Sigmoid colon (tissue), 7 donors: ENCODE measurements at regions of chr14 and their contacts with region 1.

Region 1: GRCh38 chr14:73886449-73887317 is at the start of gene ZNF410:
- DNase-seq: peak; percentile 98
- H3K4me3 ChIP-seq: peak within 1 kb of the TSS; percentile 71 to 77 (median 74)
- H3K27ac ChIP-seq: peak within 1 kb of the TSS; percentile 91 to 96 (median 94)
- H3K4me1 ChIP-seq: peaks cover 0 to 33% (median 25%) of the 10 kb centered on the region in 4 donors
- H3K27me3 ChIP-seq: no peaks in the 10 kb centered on the region
- CTCF ChIP-seq: no peak
- EP300 ChIP-seq: peak in 2 of 4 donors; percentile 18 to 76
- POLR2A ChIP-seq: peak; percentile 48 to 55
- total RNA-seq, gene ZNF410: 45.1 to 67.8 (median 53.8) TPM

Region 2: DNA sequence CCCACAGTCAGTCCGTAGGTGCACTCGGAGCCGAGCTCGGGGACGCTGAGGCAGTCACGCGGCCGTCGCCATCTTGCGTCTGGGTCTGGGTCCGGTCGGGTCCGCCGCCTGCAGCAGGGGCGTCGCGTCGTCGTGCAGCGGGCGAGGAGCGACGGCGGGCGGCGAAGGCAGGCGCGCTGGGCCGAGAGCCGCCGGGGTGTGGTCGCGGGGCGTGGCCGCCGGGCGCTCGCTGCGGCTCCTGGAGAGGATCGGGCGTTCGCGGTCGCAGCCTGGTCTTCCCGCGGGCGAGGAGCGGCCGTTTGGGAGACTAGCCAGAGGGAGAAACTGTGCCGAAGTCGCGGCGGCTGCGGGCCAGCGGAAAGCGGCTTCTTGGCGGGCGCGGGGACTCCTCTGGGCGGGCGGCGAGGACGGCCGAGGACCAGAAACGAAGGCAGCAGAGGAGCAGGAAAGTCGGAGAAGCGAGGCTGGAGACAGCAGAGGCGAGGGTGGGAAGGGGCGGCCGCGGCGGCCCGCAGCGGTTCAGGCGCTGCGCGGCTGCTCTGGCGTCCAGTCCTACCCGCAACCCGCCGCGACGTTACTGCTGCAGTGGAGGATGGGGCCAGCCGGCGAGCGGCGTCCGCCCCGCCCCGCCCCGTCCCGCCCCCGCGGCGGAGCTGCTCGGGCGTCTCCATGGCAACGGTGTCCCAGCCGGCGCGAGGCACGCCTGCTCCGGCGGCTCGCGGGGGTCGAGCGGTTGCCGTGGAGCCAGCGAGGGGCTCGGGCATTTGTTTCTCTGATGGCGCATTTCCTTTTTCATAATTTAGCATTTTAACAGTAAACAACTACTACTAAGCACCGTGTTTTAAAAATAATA is 172.7 kb before region 1 on chr14 and contains the start of gene PNMA1:
- intact Hi-C with region 1: loop called (anchors 5 kb)
- DNase-seq: peak; percentile 95
- H3K4me3 ChIP-seq: peak within 1 kb of the TSS; percentile 66 to 94 (median 80)
- H3K27ac ChIP-seq: peak within 1 kb of the TSS; percentile 90 to 99 (median 95)
- H3K4me1 ChIP-seq: peaks cover 0 to 63% (median 50%) of the 10 kb centered on the region in 4 donors
- H3K27me3 ChIP-seq: no peaks in the 10 kb centered on the region
- CTCF ChIP-seq: no peak
- EP300 ChIP-seq: no peak
- POLR2A ChIP-seq: peak; percentile 49 to 50
- total RNA-seq, gene PNMA1: 33.5 to 63.1 (median 37.3) TPM

Region 3: DNA sequence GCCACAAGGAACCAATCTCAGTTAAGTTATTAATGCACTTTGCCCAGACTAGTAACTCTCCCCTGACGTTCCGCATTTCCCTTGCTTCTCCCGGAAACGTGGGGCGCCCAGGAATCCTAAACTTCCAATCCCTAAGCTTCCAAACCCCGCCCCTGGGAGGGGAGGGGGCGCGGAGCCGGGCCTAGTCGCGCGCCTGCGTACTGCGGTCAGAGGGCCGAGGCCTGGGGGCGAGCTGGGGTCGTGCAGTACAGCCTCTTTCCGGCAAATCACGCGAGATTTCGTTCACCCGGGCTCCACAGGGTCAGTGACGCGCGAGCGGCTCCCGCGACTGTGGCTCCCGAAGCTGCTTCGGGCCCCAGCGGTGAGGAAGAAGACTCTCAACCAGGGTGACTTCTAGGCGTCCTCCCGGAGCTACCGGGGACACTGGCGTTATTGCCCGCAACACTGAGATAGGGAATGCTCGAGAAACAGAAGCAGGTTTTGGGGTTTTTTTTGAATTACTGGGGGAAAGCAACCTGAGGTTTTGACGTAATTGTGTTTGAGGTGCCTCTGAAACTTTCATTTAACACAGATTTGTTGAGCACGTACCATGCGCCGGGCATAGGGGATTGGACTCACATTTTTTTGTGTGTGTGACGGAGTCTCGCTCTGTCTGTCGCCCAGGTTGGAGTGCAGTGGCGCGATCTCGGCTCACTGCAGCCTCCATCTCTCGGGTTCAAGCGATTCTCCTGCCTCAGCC is 34.9 kb before region 1 on chr14 and contains the start of gene PTGR2:
- intact Hi-C with region 1: loop called (anchors 1 kb)
- DNase-seq: peak; percentile 98
- H3K4me3 ChIP-seq: peak within 1 kb of the TSS; percentile 36 to 61 (median 60)
- H3K27ac ChIP-seq: peak within 1 kb of the TSS; percentile 89 to 93 (median 92)
- H3K4me1 ChIP-seq: peaks cover 0 to 16% (median 10%) of the 10 kb centered on the region in 4 donors
- H3K27me3 ChIP-seq: no peaks in the 10 kb centered on the region
- CTCF ChIP-seq: peak in 3 of 4 experiments; percentile 16 to 24 (median 20)
- EP300 ChIP-seq: peak in 1 of 4 donors; percentile 20
- POLR2A ChIP-seq: peak; percentile 77 to 93
- total RNA-seq, gene PTGR2: 5.0 to 11.4 (median 6.3) TPM

Region 4: DNA sequence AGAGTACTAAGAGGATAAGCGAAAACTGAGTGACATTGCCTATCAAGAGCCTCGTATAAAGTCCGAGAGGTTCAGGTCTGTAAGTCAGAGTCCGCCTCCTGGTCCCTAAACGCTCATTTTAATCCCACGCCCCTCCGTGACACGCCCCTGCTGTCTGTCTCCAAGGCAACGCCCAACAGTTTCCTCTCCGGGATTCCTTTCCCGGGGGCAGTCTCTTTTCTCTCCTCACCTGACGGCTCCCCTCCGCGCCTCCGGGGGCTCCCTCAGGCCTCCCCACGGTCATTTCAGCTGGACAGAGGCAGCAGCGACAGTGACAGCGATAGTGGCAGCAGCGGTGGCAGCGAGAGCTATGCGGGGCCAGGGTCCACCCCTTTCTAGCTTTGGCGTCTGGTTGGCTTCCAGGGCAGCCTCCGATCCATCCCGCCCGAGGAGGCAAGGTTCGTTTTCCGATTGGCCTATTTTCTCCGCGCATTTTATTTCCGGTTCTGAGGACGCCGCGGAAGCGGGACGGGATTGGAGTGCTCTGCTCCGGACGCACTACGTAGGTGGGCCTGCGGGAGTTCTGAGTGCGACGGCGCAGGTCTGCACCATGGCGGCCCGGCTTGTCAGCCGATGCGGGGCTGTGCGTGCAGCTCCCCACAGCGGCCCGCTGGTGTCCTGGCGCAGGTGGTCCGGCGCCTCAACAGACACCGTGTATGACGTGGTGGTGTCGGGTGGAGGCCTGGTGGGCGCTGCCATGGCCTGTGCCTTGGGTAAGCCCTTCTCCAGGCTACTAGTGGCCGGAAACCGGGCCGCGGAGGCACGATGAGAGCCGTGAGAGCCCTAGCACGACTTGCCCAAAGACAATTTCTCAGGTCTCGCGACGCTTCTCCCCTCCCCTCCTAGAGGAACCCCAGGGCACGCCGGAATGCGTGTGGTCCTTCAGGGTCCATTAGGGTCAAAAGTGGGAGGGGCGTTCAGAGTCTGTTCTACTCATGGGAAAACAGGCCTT is 63.4 kb after region 1 on chr14 and contains the starts of genes COQ6 and FAM161B:
- intact Hi-C with region 1: loop called (anchors 5 kb)
- DNase-seq: peak; percentile 98
- H3K4me3 ChIP-seq: peak within 1 kb of the TSS; percentile 58 to 98 (median 76)
- H3K27ac ChIP-seq: peak within 1 kb of the TSS; percentile 86 to 96 (median 92)
- H3K4me1 ChIP-seq: peaks cover 0 to 22% (median 16%) of the 10 kb centered on the region in 4 donors
- H3K27me3 ChIP-seq: no peaks in the 10 kb centered on the region
- CTCF ChIP-seq: no peak
- EP300 ChIP-seq: no peak
- POLR2A ChIP-seq: peak; percentile 73 to 74
- total RNA-seq, gene COQ6: 23.8 to 31.6 (median 30.6) TPM
- total RNA-seq, gene FAM161B: 3.8 to 5.3 (median 4.5) TPM

Region 5: DNA sequence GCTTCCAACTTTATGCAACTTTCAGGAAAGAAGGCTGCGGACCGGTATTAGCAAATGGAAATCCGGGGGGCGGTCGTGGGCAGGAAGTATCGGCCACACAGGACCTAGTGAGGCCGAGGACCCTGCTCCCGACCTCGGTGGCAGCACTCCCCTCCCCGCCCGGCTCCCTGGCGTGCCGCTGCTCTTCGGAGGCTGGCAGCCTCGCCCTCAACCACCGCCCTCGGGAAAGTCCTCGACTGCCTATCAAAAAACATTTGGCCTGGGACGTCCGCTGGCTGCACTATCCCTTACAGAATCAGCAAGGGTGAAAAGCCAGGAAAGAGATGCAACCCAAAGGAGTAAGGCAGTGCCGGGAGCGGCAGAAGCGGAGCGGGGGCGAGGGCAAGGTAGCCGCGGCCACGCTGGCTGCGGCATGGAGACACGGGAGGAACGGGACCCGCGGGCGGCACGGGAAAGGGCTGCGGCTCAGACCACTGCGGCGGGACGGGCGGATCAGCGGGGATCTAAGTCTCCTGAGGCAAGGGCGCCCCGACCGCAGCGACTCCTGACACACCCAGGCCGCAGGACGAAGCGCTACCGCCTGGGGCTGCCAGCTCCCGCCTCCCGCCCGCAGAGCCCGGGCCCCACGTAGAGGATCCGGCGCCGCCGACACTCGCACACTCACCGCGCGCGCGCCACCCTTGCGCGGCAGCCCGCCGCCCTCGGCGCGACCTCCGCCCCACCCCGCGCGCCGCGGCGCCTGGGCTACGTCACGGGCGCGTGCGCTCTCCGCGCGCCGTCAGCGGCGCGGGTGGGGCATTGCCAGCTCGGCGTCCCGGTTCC is 132.1 kb after region 1 on chr14 and contains the starts of genes BBOF1 and ENTPD5:
- intact Hi-C with region 1: loop called (anchors 10 kb)
- DNase-seq: peak; percentile 92
- H3K4me3 ChIP-seq: peak within 1 kb of the TSS; percentile 83 to 98 (median 91)
- H3K27ac ChIP-seq: peak within 1 kb of the TSS; percentile 96 to 98 (median 98)
- H3K4me1 ChIP-seq: peaks cover 0 to 19% (median 15%) of the 10 kb centered on the region in 4 donors
- H3K27me3 ChIP-seq: no peaks in the 10 kb centered on the region
- CTCF ChIP-seq: no peak
- EP300 ChIP-seq: no peak
- POLR2A ChIP-seq: peak; percentile 57 to 64
- total RNA-seq, gene BBOF1: 8.9 to 13.6 (median 11.6) TPM
- total RNA-seq, gene ENTPD5: 8.0 to 11.1 (median 8.7) TPM